Upper lobe of right lung (tissue), 1 donor: ENCODE measurements at regions of chr15 and their contacts with region 1.

Region 1: GRCh38 chr15:55026381-55026780 is 170.4 kb downstream of the RSL24D1 start:
- DNase-seq: no peak
- ATAC-seq: no peak
- H3K4me3 ChIP-seq: no peak overlapping the region
- H3K27ac ChIP-seq: no peak overlapping the region
- H3K4me1 ChIP-seq: no peaks in the 10 kb centered on the region
- H3K27me3 ChIP-seq: no peaks in the 10 kb centered on the region
- CTCF ChIP-seq: no peak

Region 2: DNA sequence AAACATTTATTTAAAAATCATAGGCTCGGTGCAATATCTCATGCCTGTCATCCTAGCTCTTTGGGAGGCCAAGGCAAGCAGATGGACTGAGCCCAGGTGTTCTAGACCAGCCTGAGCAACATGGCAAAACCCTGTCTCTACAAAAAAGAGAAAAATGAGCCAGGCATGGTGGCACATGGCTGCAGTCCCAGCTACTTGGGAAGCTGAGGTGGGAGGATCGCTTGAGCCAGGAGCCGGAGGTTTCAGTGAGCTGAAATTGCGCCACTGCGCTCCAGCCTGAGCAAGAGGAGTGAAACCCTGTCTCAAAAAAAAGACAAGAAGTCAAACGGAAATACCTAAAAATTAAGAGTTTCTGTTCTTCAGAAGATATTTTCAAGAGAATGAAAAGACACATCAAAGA is 48.0 kb after region 1 on chr15:
- intact Hi-C with region 1: no loop called
- DNase-seq: no peak
- ATAC-seq: no peak
- H3K4me3 ChIP-seq: no peak overlapping the region
- H3K27ac ChIP-seq: no peak overlapping the region
- H3K4me1 ChIP-seq: no peaks in the 10 kb centered on the region
- H3K27me3 ChIP-seq: no peaks in the 10 kb centered on the region
- CTCF ChIP-seq: no peak

Region 3: DNA sequence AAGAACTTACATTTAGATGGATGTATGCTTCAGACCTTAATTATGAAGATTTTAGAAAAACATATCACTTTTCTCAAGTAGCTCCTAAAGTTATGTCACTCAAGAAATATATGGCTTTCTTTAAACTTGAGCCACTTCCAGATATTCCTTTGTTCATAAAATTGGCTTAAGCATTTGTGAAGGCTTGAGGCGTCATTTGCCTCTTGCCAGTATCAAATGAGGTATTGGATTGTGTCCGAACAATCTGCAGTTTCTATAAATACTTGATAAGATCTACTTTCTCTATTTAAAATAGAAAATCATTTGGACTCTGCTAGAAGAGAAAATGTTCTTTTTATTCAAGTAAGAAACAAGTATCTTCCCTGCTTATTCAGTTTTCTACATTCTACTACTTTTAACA is 67.8 kb after region 1 on chr15:
- intact Hi-C with region 1: no loop called
- DNase-seq: no peak
- ATAC-seq: no peak
- H3K4me3 ChIP-seq: no peak overlapping the region
- H3K27ac ChIP-seq: no peak overlapping the region
- H3K4me1 ChIP-seq: no peaks in the 10 kb centered on the region
- H3K27me3 ChIP-seq: no peaks in the 10 kb centered on the region
- CTCF ChIP-seq: no peak

Region 4: GRCh38 chr15:55124616-55125015 is 98.2 kb after region 1 on chr15:
- intact Hi-C with region 1: loop called (anchors 10 kb)
- DNase-seq: no peak
- ATAC-seq: no peak
- H3K4me3 ChIP-seq: no peak overlapping the region
- H3K27ac ChIP-seq: no peak overlapping the region
- H3K4me1 ChIP-seq: no peaks in the 10 kb centered on the region
- H3K27me3 ChIP-seq: no peaks in the 10 kb centered on the region
- CTCF ChIP-seq: no peak